Lower lobe of right lung (tissue), 2 donors: ENCODE measurements at regions of chr12 and their contacts with region 1.

Region 1: GRCh38 chr12:10771132-10771733 is 31.2 kb downstream of the TAS2R7 start:
- DNase-seq: no peak
- ATAC-seq: no peak
- H3K4me3 ChIP-seq: no peak overlapping the region
- H3K27ac ChIP-seq: no peak overlapping the region
- H3K4me1 ChIP-seq: no peaks in the 10 kb centered on the region
- H3K27me3 ChIP-seq: no peaks in the 10 kb centered on the region
- CTCF ChIP-seq: peak; percentile 64

Region 2: DNA sequence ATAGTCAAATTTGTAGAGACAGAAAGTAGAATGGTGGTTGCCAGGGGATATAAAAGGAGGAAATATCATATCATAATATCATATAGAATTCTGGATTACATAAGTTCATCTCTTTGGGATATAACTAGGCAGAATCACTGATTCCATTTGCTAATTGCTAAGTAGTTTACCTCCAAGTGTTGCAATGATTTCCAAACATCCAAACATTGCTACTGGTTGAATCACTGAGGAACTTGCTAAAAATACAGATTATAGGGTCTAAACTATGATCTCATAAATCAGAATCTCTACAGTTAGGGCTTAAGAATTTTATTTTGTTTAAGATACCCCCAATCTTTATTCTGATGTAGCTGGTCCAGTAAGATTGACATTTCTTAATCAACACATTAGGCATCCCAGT is 431.6 kb after region 1 on chr12:
- intact Hi-C with region 1: loop called (anchors 10 kb)
- DNase-seq: no peak
- ATAC-seq: no peak
- H3K4me3 ChIP-seq: no peak overlapping the region
- H3K27ac ChIP-seq: no peak overlapping the region
- H3K4me1 ChIP-seq: no peaks in the 10 kb centered on the region
- H3K27me3 ChIP-seq: no peaks in the 10 kb centered on the region
- CTCF ChIP-seq: no peak

Region 3: GRCh38 chr12:11486623-11487444 is 715.6 kb after region 1 on chr12:
- intact Hi-C with region 1: loop called (anchors 10 kb)
- DNase-seq: peak; percentile 72
- ATAC-seq: peak; percentile 87 to 93
- H3K4me3 ChIP-seq: no peak overlapping the region
- H3K27ac ChIP-seq: no peak overlapping the region
- H3K4me1 ChIP-seq: no peaks in the 10 kb centered on the region
- H3K27me3 ChIP-seq: no peaks in the 10 kb centered on the region
- CTCF ChIP-seq: peak; percentile 93